ENCODE measurements at regions of chr10 and their contacts with region 1.

Region 1: DNA sequence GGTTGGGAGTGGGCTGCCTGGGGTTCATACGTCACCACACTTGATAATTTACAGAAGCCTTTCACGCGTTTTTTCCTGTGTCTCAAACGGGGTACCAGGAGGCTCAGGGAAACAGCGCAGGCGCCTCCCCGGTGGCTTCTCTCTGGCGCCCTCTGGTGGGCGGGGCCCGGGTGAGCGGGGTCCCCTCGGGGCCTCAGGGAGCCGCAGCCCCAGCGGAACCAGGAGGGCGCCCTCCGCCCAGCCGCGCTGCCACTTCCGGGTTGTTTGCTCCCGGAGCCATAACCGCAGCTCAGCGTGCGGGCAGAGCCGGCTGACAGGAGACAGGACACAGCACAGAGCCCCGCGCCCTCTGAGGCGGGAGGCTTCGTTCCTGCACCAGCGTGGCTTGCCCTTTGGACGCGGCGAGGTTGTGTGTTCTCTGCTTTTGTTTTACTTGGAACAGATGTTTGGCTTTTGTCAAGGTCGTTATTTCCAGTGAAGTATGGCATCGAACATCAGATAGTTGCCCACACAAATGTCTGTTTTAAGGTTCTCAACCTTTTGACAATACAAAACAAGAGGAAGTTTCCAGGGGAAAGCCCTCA is 6.9 kb upstream of the CYP2E1 start:
- DNase-seq: peak; percentile 90
- ATAC-seq: peak; percentile 99
- H3K4me3 Mint-ChIP-seq: peak overlapping the region; percentile 73
- H3K27ac Mint-ChIP-seq: peak overlapping the region; percentile 50
- H3K4me1 Mint-ChIP-seq: peaks cover 10% of the 10 kb centered on the region
- H3K27me3 Mint-ChIP-seq: peaks cover 16% of the 10 kb centered on the region
- CTCF ChIP-seq: peak; percentile 73

Region 2: GRCh38 chr10:133438711-133439273 is 81.5 kb before region 1 on chr10:
- CTCF ChIA-PET with region 1: no interaction called
- POLR2A ChIA-PET with region 1: no interaction called
- intact Hi-C with region 1: loop called (anchors 10 kb)
- DNase-seq: no peak
- ATAC-seq: no peak
- H3K4me3 Mint-ChIP-seq: no peak overlapping the region
- H3K27ac Mint-ChIP-seq: no peak overlapping the region
- H3K4me1 Mint-ChIP-seq: peaks cover 6% of the 10 kb centered on the region
- H3K27me3 Mint-ChIP-seq: peaks cover 5% of the 10 kb centered on the region
- CTCF ChIP-seq: no peak

Region 3: DNA sequence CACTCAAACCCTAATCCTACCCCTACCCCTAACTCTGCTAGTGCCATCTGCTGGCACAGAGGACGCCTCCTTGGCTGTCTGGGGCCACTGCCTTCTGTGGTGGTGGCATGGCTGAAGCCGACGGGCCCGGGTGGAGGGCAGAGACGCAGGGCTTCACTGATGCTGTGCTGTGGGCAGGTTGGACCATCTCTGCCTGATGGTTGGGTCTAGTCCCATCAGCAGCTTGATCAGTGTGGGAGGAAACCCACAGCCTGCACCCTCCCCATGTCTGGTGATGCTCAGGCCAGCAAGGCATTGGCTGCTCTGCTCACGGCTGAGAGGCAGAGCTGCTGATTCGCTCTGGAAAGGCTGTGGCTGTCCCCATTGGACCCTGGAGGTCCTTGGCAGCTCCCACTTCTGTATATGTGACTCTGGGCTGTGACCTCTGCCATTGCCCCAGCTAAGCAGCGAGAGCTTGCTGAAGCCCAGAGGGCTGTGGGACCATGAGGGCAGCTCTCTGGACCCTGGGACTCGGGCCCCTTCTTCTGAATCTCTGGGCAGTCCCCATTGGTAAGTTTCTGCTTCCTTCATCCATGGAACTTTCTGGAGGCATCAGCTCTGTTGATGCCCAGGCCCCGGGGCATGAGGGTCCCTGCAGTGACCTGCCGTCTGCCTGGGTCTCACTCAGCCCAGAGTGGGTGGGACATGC is 66.6 kb before region 1 on chr10 and contains the start of gene SCART1:
- CTCF ChIA-PET with region 1: no interaction called
- POLR2A ChIA-PET with region 1: no interaction called
- intact Hi-C with region 1: no loop called
- DNase-seq: no peak
- ATAC-seq: no peak
- H3K4me3 Mint-ChIP-seq: no peak within 1 kb of the TSS
- H3K27ac Mint-ChIP-seq: no peak within 1 kb of the TSS
- H3K4me1 Mint-ChIP-seq: no peaks in the 10 kb centered on the region
- H3K27me3 Mint-ChIP-seq: no peaks in the 10 kb centered on the region
- CTCF ChIP-seq: no peak
- total RNA-seq, gene SCART1: 2.8 TPM in 2 replicates

Region 4: DNA sequence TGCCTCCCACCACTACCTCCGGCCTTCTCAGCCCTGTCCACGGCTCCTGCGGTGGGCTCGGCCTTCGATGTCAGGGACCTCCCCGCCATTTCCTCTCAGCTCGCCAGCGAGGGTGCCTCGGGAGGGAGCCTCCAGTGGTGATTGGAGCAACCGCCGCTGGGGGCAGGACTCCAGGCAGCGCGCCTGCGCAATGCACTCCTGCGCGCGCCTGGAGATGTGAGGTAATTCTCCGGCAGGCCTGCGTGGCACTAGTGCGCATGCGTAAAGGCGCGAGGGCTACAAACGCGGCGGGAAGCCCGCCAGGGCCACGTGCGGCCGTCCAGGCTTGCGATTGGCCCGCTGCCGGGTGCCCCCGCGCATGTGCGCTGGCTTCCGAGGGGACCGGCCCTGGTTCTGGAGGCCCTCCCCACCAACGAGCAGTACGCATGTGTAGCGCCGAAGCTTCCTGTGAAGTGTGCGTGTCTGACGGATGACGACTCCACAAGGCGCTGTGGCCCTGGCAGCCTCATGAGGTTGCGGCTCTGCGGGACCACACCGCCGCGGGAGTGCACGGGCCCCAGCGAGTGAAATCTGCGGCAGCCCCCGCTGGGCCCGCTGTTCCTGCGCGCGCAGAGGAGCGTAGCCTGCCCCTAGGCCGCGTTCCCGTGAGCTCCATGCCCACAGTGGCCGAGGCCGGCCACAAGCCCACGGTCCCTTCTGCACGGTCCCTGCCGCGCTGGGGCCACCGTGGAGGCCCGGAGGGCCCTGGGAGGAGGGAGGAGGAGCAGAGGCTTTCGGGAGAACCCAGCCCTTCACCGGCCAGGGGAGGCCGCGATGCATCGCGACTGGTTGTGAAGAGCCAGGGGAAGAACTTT is 45.4 kb after region 1 on chr10 and contains the start of gene SYCE1:
- CTCF ChIA-PET with region 1: no interaction called
- POLR2A ChIA-PET with region 1: no interaction called
- intact Hi-C with region 1: no loop called
- DNase-seq: no peak
- ATAC-seq: no peak
- H3K4me3 Mint-ChIP-seq: no peak within 1 kb of the TSS
- H3K27ac Mint-ChIP-seq: no peak within 1 kb of the TSS
- H3K4me1 Mint-ChIP-seq: no peaks in the 10 kb centered on the region
- H3K27me3 Mint-ChIP-seq: peaks cover 9% of the 10 kb centered on the region
- CTCF ChIP-seq: no peak
- total RNA-seq, gene SYCE1: 0.17 TPM in 1 of 2 replicates, not detected in the other

Measured in activated B cell treated with CpG ODN at 0.5 μM for 24 hours (primary cell).